BJ (cell line): ENCODE measurements at regions of chr11 and their contacts with region 1.

Region 1: DNA sequence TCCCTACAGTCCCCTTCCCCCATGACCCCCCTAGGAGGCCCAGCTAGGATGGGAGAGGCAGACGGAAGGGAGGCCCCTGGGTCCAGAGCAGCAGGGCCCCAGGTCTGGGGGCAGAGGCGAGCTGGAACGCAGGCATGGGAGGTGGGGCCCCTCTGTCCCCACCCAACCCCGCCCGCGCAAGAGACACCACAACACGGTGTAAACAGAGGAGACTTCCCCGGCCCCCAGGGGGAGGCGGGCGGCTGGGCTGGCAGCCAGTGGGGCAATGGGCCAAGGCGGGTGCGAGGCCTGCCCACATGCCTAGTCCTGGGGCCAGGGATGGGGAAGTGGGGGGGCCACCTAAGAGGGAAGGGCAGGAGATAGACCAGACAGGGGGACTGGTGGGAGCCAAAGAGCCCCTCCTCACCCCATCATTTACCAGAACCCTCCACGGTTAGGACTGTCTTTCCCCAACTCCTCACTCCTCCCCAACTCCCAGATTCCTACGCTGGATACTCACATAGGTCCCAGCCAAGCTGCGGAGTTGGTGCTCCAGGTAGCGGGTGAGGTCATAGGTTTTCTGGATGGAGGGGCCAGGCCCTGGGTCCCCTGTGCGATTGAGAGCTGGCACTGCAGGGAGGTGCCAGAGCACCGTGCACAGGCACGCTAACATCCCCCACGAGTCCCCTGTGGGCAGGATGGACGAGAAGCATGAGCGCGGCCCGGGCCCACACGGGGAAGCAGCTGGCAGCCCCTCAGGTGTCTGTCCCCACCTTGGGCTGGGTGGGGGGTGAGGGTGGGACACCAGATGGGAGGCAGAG is 6.2 kb downstream of the CLCF1 start:
- DNase-seq: no peak
- H3K4me3 ChIP-seq: no peak overlapping the region
- H3K27me3 ChIP-seq: no peaks in the 10 kb centered on the region
- CTCF ChIP-seq: no peak

Region 2: DNA sequence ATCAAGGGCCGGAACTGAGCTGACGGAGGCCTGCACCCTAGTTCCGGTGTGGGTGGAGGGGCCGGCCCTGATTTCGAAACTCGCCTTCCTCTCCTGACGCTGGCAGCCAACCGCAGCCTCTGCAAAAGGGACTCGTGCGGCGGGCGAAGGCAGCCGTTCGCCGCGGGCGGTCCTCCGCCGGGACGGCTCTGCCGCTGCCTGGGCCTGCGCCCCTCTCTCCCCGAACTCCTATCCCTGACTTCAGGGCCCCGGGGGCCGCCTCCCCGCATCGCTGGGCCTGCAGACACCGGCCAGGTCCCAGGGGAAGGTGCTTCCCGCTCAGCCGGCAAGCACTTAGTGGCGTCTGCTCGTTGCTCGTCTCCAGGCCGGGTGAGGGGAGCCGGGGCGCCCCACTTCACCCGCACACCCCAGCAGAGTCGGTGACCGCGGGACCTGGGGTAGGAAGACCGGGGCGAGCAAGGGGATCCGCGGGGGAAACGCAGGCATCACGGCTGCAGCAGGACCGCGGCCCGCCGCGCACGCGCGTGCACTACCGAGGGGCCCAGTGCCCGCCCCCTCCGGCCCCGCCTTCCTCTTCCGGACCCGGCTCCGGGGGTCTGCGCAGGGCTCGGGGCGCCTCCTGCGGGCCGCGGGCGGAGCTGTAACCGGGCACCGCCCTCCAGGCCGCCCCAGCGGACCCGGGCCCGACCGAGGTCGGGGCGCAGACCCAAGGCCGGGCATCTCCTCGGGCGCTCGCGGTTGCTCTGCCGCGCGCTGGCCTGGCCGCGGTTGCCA is 78.5 kb before region 1 on chr11:
- CTCF ChIA-PET with region 1: no interaction called
- POLR2A ChIA-PET with region 1: interaction called, 11 read pairs
- DNase-seq: no peak
- H3K4me3 ChIP-seq: peak overlapping the region; percentile 94
- H3K27me3 ChIP-seq: no peaks in the 10 kb centered on the region
- CTCF ChIP-seq: no peak

Region 3: DNA sequence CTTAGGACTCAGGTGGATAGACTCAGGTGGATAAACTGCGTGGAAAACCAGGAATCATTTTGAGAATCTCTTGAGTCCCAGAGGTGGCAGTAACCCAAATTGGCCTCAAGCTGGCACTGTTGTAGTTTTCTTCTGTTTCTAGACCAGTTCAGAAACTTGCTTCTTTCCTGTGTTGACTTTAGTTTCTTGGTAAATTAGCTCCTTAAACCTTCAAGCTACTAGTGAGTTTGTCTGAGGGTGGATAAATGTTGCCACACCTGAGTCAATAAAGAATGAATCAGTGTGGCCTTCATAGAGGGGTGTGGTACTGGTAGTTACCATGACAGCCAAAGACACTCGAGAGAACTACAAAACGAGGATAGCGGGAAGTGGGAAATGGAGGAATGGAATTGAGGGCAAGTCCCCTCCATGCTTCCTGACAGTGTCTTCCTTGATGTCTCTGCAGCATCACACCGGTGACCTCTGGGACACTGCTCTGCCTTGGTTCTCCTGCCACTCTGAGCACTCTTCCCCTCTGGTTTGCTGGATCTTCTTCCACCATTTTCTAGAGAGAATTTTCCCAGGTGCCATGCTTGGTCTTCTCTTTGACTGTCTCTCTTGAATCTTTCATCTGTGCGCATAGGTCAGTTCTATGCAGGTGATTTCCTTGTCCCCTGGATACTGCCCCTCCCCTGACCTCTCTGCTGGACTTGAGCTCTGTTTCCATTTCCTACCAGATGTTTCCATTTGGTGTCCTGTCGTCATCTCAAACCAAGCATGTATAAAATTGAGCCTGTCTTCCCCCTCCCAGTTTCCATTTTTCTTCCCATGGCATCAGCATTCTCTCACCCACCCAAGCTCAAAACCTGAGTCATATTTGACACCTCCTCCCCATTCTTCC is 21.0 kb before region 1 on chr11:
- CTCF ChIA-PET with region 1: interaction called, 892 read pairs
- POLR2A ChIA-PET with region 1: no interaction called
- DNase-seq: no peak
- H3K4me3 ChIP-seq: no peak overlapping the region
- H3K27me3 ChIP-seq: no peaks in the 10 kb centered on the region
- CTCF ChIP-seq: peak; percentile 81